ENCODE measurements at regions of chr14 and their contacts with region 1.

Region 1: DNA sequence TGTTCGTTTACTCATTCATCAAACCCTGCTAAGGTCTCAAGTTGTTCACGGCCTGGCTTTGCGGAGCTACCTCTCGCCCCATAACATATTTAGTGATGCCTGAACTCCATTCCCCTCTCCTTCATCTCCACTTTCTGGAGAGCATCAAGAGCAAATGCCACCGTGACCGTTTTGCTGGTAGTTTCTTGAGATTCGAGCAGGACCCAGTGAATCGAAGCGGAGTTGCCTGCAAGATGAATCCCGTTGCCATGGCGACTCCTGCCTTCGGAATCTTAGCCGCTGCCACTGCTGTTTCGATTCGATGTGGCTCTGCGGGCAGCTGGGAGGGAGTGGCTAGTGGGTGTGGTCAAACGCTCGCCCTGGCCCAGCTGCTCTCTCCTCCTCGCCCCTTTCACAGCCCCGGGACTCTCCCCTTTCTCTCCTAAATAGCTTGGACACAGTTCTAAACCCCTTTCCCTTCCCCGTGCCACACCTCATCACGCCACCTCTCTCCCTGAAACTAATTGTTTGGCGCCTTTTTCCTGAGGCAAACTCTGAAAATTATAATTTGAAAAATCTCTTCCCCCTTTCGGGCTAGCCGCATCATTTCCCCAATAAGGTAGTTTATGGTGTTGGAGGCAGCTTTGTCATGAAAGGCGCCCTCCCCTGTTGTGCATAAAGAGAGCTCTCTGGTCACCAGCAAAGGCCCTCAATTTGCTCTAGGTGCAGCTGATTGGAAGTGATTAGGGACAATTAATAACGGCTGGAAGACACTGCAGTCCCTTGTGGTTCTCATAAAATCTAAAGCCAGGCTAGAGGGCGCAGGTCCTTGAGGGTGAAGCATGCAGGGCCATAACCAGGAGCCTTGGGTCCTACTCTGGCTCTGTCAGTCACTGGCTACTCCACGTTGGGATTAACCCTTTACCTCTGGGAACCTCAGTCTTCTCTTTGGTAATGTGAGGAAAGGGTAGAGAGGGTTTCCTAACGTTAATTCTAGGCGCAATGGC is 1.6 kb downstream of the DAAM1 start:
- DNase-seq: peak; percentile 34 to 76 (median 49)
- ATAC-seq: peak; percentile 4
- H3K4me3 ChIP-seq: peak overlapping the region; percentile 93
- H3K4me3 Mint-ChIP-seq: peak overlapping the region; percentile 92 to 100 (median 96)
- H3K27ac ChIP-seq: peak overlapping the region; percentile 91
- H3K27ac Mint-ChIP-seq: peak overlapping the region; percentile 85 to 98 (median 93)
- H3K4me1 ChIP-seq: peaks cover 0 to 10% of the 10 kb centered on the region in 2 donors
- H3K4me1 Mint-ChIP-seq: peaks cover 15 to 30% (median 21%) of the 10 kb centered on the region in 7 donors
- H3K27me3 ChIP-seq: no peaks in the 10 kb centered on the region
- H3K27me3 Mint-ChIP-seq: peaks cover 0 to 22% (median 4%) of the 10 kb centered on the region in 5 donors

Region 2: GRCh38 chr14:57268161-57269069 is 1921.7 kb before region 1 on chr14 and contains the starts of genes AP5M1 and EXOC5:
- CTCF ChIA-PET with region 1: no interaction called
- POLR2A ChIA-PET with region 1: no interaction called
- intact Hi-C with region 1: loop called in 1 of 2 experiments (anchors 2 kb)
- DNase-seq: peak; percentile 78 to 95 (median 93)
- ATAC-seq: peak; percentile 89
- H3K4me3 ChIP-seq: peak within 1 kb of the TSS; percentile 89
- H3K4me3 Mint-ChIP-seq: peak within 1 kb of the TSS; percentile 97 to 100 (median 99)
- H3K27ac ChIP-seq: peak within 1 kb of the TSS; percentile 91
- H3K27ac Mint-ChIP-seq: peak within 1 kb of the TSS; percentile 98 to 100 (median 99)
- H3K4me1 ChIP-seq: peaks cover 29 to 34% of the 10 kb centered on the region in 2 donors
- H3K4me1 Mint-ChIP-seq: peaks cover 41 to 93% (median 76%) of the 10 kb centered on the region in 7 donors
- H3K27me3 ChIP-seq: no peaks in the 10 kb centered on the region
- H3K27me3 Mint-ChIP-seq: no peaks in the 10 kb centered on the region
- total RNA-seq, gene AP5M1: 42.3 to 62.8 (median 52.1) TPM
- total RNA-seq, gene EXOC5: 27.3 to 71.6 (median 42.2) TPM

Region 3: DNA sequence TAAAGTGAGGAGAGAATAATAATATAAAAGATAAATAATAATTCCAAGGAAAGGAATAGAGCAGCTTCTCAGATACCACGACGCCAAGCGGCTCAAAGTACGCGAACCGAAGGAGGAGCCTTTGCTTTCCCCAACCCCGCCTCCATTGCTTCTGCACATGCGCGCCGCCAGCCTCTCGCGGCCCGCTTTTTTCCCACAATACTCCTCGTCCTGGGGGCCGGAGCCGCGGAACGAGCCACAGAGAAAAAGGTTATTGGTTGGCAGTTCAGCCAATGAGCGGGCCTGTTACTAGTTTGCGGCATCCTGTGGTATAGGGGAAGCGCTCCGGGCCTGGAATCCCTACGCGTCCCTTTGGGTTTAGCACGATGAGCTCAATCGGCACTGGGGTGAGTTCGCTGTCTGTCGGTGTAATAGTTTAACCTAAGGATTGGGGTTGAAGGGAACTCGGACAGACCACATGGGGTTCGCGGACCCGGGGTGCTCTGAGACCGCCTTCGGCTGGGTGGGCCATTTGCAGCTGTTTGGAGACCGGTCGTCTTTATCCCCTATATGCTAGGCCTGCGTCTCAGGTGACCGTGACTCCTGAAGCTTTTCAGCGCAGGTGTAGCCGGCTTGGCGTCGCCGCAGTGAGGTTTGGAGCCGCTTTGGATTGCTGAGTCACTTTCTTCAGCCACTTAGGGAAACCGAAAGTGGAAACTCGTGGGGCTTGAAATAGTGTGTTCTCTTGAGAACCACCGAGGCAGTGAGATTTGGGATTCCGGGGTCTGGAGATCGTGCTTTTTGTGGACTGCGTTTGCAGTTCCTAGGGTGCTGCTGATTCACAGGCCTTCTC is 945.3 kb before region 1 on chr14 and contains the start of gene PSMA3:
- CTCF ChIA-PET with region 1: no interaction called
- POLR2A ChIA-PET with region 1: interaction called, 4 read pairs
- intact Hi-C with region 1: loop called (anchors 1 kb)
- DNase-seq: peak; percentile 95 to 98 (median 98)
- ATAC-seq: peak; percentile 96
- H3K4me3 ChIP-seq: peak within 1 kb of the TSS; percentile 100
- H3K4me3 Mint-ChIP-seq: peak within 1 kb of the TSS; percentile 89 to 99 (median 96)
- H3K27ac ChIP-seq: peak within 1 kb of the TSS; percentile 86
- H3K27ac Mint-ChIP-seq: peak within 1 kb of the TSS; percentile 97 to 99 (median 98)
- H3K4me1 ChIP-seq: peaks cover 23 to 26% of the 10 kb centered on the region in 2 donors
- H3K4me1 Mint-ChIP-seq: peaks cover 27 to 61% (median 52%) of the 10 kb centered on the region in 7 donors
- H3K27me3 ChIP-seq: no peaks in the 10 kb centered on the region
- H3K27me3 Mint-ChIP-seq: peaks cover 0 to 1% (median 0%) of the 10 kb centered on the region in 5 donors
- total RNA-seq, gene PSMA3: 76.5 to 357 (median 97.1) TPM

Region 4: DNA sequence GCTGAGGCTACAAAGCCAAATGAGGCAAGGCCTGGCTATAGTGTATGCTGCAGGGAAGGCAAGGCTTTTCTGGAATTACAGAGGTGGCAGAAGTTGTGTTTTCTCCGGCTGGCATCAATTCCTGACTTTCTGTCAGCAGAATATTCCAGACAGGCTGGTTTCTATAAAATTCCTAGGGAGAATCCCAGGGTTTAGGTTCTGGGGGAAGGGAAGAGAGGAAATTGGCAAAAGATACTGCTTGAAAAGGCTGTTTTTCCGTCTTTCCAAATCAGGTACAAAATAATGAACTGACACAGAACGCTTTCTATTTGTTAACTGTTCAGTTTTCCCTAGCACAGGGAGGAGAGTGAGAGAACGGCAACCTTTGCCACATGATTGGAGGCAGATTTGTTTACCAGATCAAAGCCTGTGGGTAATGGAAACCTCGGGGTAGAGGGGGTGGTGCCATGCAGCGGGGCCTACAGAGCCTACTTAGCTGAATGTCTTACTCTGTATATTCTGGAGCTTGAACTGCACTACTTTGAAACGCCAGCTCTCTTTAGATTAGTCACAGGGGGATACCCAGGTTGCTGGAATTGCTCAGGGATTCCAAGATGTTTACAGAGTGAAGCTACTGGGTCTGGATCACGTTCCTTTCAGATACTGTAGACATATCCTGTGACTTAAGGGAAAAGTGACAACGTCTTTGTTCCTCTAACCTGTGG is 618.2 kb before region 1 on chr14:
- CTCF ChIA-PET with region 1: no interaction called
- POLR2A ChIA-PET with region 1: no interaction called
- intact Hi-C with region 1: loop called in 1 of 2 experiments (anchors 2 kb)
- DNase-seq: peak in 8 of 9 donors; percentile 41 to 80 (median 69)
- ATAC-seq: peak; percentile 87
- H3K4me3 ChIP-seq: no peak overlapping the region
- H3K4me3 Mint-ChIP-seq: peak overlapping the region; percentile 35 to 83 (median 70)
- H3K27ac ChIP-seq: peak overlapping the region; percentile 40
- H3K27ac Mint-ChIP-seq: peak overlapping the region; percentile 74 to 96 (median 93)
- H3K4me1 ChIP-seq: peaks cover 0 to 33% of the 10 kb centered on the region in 2 donors
- H3K4me1 Mint-ChIP-seq: peaks cover 14 to 67% (median 51%) of the 10 kb centered on the region in 7 donors
- H3K27me3 ChIP-seq: no peaks in the 10 kb centered on the region
- H3K27me3 Mint-ChIP-seq: no peaks in the 10 kb centered on the region

Region 5: DNA sequence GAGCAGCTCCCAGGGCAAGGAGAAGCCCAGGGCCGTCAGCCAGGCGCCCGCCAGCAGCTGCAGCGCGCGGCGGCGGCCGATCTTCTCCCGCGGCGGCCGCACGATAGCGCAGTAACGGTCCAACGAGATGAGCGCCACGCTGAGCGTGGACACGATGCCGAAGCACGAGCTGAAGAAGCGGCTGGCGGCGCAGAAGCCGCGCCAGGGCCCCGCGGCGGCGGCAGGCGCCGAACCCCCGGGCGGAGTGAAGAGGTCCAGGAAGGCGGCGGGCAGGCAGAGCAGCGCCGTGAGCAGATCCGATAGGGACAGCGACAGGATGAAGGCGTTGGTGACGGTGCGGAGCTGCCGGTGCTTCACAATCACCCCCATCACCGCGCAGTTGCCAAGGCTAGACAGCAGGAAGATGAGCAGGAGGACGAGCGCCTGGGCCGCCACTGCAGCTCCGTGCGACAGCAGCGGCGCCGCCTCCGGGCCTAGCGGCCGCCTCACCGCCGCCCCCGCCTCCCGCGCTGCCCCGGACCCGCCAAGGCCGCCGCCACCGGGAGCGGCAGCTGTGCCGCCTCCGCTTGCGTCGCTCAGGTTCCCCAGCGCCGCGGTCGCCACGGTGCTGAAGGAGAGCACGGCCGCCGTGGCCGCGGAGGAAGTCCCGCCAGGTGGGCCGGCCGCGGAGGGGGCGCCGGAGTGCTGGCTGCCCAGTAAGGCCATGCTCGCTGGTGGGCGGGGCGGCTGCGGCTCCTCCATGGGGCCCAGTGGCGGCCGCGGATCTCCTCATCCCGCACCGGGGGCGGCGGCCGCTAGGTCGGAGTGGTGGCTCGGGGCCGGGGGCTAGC is 274.6 kb after region 1 on chr14:
- CTCF ChIA-PET with region 1: no interaction called
- POLR2A ChIA-PET with region 1: interaction called, 3 read pairs
- intact Hi-C with region 1: loop called (anchors 1 kb)
- DNase-seq: peak; percentile 40 to 71 (median 59)
- ATAC-seq: peak; percentile 78
- H3K4me3 ChIP-seq: peak overlapping the region; percentile 66
- H3K4me3 Mint-ChIP-seq: peak overlapping the region; percentile 85 to 94 (median 90)
- H3K27ac ChIP-seq: peak overlapping the region; percentile 65
- H3K27ac Mint-ChIP-seq: peak overlapping the region in 5 of 9 donors; percentile 60 to 82 (median 72)
- H3K4me1 ChIP-seq: peaks cover 0 to 9% of the 10 kb centered on the region in 2 donors
- H3K4me1 Mint-ChIP-seq: peaks cover 0 to 17% (median 7%) of the 10 kb centered on the region in 7 donors
- H3K27me3 ChIP-seq: no peaks in the 10 kb centered on the region
- H3K27me3 Mint-ChIP-seq: peaks cover 8 to 16% (median 12%) of the 10 kb centered on the region in 5 donors

Region 6: GRCh38 chr14:60091550-60092530 is 901.8 kb after region 1 on chr14 and contains the start of gene PCNX4:
- CTCF ChIA-PET with region 1: no interaction called
- POLR2A ChIA-PET with region 1: no interaction called
- intact Hi-C with region 1: loop called (anchors 1 to 2 kb)
- DNase-seq: peak; percentile 79 to 95 (median 94)
- ATAC-seq: peak; percentile 95
- H3K4me3 ChIP-seq: peak within 1 kb of the TSS; percentile 94
- H3K4me3 Mint-ChIP-seq: peak within 1 kb of the TSS; percentile 88 to 98 (median 95)
- H3K27ac ChIP-seq: peak within 1 kb of the TSS; percentile 96
- H3K27ac Mint-ChIP-seq: peak within 1 kb of the TSS; percentile 90 to 99 (median 96)
- H3K4me1 ChIP-seq: peaks cover 14 to 16% of the 10 kb centered on the region in 2 donors
- H3K4me1 Mint-ChIP-seq: peaks cover 28 to 48% (median 41%) of the 10 kb centered on the region in 7 donors
- H3K27me3 ChIP-seq: peaks cover 0 to 4% of the 10 kb centered on the region in 2 donors
- H3K27me3 Mint-ChIP-seq: peaks cover 0 to 5% (median 0%) of the 10 kb centered on the region in 5 donors
- total RNA-seq, gene PCNX4: 34.9 to 48.2 (median 43.3) TPM

Region 7: GRCh38 chr14:60753264-60754119 is 1563.4 kb after region 1 on chr14:
- CTCF ChIA-PET with region 1: no interaction called
- POLR2A ChIA-PET with region 1: no interaction called
- intact Hi-C with region 1: loop called in 1 of 2 experiments (anchors 5 kb)
- DNase-seq: peak in 8 of 9 donors; percentile 54 to 86 (median 81)
- ATAC-seq: peak; percentile 96
- H3K4me3 ChIP-seq: no peak overlapping the region
- H3K4me3 Mint-ChIP-seq: peak overlapping the region in 9 of 10 donors; percentile 48 to 85 (median 61)
- H3K27ac ChIP-seq: no peak overlapping the region
- H3K27ac Mint-ChIP-seq: peak overlapping the region; percentile 29 to 93 (median 81)
- H3K4me1 ChIP-seq: peaks cover 19 to 20% of the 10 kb centered on the region in 2 donors
- H3K4me1 Mint-ChIP-seq: peaks cover 21 to 64% (median 42%) of the 10 kb centered on the region in 7 donors
- H3K27me3 ChIP-seq: no peaks in the 10 kb centered on the region
- H3K27me3 Mint-ChIP-seq: peaks cover 0 to 7% (median 0%) of the 10 kb centered on the region in 5 donors